Activated CD8-positive, alpha-beta T cell treated with anti-CD3 and anti-CD28 coated beads for 36 hours (primary cell): ENCODE measurements at regions of chr17 and their contacts with region 1.

Region 1: GRCh38 chr17:82551779-82552457 is 32.4 kb downstream of the FOXK2 start:
- DNase-seq: peak; percentile 88
- ATAC-seq: peak; percentile 100
- H3K4me3 Mint-ChIP-seq: no peak overlapping the region
- H3K27ac Mint-ChIP-seq: no peak overlapping the region
- H3K4me1 Mint-ChIP-seq: peaks cover 37% of the 10 kb centered on the region
- H3K27me3 Mint-ChIP-seq: no peaks in the 10 kb centered on the region
- CTCF ChIP-seq: peak; percentile 89

Region 2: DNA sequence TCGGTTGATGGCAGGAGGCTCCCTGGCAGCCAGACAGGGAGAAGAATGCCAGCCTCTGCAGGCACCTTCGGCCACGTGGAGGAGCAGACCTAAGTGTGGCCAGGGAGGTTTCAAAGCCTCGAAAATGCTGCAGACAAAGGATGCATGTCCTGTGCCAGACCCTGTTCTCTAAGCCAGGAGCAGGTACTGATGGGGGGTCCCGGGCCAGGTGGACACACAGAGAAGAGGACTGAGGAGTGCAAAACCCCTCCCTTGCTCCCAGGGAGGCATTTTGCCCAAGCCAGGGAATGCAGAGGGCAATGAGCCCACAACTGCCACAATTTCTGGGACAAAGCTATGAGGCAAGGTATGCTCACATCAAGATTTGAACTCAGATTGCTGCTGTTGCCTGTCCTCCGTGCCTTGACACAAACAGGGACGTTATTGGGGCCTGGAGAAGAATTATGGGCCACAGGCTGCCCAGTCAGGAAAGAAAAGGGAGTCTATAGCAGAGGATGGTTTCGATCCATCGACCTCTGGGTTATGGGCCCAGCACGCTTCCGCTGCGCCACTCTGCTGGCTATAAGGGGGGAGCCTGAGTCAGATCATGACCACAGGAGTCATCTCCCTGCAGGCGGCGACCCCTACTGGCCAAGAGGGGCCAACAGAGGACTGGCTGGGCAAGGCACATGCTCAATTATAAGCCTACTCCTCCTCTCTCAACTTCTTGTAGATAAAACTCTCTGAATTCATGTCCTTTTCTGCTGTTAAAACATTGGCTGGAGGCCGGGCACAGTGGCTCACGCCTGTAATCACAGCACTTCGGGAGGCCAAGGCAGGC is 57.5 kb before region 1 on chr17:
- CTCF ChIA-PET with region 1: interaction called, 6 read pairs
- POLR2A ChIA-PET with region 1: no interaction called
- intact Hi-C with region 1: loop called (anchors 10 kb)
- DNase-seq: peak; percentile 93
- ATAC-seq: peak; percentile 84
- H3K4me3 Mint-ChIP-seq: peak overlapping the region; percentile 72
- H3K27ac Mint-ChIP-seq: peak overlapping the region; percentile 85
- H3K4me1 Mint-ChIP-seq: peaks cover 18% of the 10 kb centered on the region
- H3K27me3 Mint-ChIP-seq: no peaks in the 10 kb centered on the region
- CTCF ChIP-seq: peak; percentile 91

Region 3: DNA sequence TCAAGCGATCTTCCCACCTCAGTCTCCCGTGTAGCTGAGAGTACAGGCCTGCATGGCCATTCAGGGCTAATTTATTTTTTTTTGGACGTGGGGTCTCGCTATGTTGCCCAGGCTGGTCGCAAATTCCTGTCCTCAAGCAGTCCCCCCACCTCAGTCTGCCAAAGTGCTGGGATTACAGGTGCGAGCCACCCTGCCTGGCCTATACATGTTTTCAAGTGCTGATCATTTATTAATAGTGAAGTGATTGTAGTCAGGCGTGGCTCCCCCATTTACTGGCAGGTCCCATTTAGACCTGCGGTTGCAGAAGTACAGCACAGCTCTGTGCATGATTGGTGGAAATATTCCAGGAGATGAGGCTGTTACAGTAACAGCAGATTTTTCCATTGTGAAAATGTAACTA is 24.0 kb before region 1 on chr17:
- CTCF ChIA-PET with region 1: interaction called, 11 read pairs
- POLR2A ChIA-PET with region 1: interaction called, 3 read pairs
- intact Hi-C with region 1: no loop called
- DNase-seq: no peak
- ATAC-seq: no peak
- H3K4me3 Mint-ChIP-seq: no peak overlapping the region
- H3K27ac Mint-ChIP-seq: no peak overlapping the region
- H3K4me1 Mint-ChIP-seq: peaks cover 60% of the 10 kb centered on the region
- H3K27me3 Mint-ChIP-seq: no peaks in the 10 kb centered on the region
- CTCF ChIP-seq: no peak

Region 4: DNA sequence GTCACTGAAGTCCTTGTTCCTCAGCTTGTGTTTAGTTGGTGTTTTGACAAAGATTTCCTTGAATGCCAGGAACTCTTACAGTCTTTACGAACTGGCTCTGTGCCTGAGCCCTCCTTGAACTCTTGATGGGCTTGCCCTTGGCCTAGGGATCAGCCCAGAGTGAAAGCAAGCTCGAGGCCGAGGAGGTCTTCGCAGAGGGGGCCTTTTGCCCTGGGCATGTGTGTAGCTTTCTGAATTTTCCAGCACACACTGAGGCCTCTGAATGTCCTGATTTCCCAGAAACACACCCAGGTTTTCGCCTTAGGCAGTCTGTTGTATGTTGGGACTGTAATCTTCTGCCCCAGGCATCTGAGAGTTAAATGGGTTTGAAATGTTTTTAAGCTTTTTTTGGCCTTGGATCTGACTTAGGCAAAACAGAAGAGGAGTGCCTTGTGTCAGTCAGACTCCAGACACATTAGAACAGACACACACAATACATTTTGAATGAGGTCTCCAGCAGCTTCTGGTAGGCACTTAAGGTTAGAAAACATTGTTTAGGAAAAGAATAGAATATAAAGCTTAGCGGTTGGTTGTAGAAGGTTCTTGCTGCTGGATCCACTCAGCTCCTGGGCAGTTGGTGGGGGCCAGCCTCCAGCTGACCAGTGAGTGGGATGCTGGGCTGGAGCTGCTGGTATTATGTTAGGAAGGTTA is 15.3 kb before region 1 on chr17:
- CTCF ChIA-PET with region 1: interaction called, 23 read pairs
- POLR2A ChIA-PET with region 1: interaction called, 5 read pairs
- intact Hi-C with region 1: no loop called
- DNase-seq: no peak
- ATAC-seq: no peak
- H3K4me3 Mint-ChIP-seq: no peak overlapping the region
- H3K27ac Mint-ChIP-seq: peak overlapping the region; percentile 76
- H3K4me1 Mint-ChIP-seq: peaks cover 52% of the 10 kb centered on the region
- H3K27me3 Mint-ChIP-seq: no peaks in the 10 kb centered on the region
- CTCF ChIP-seq: no peak

Region 5: DNA sequence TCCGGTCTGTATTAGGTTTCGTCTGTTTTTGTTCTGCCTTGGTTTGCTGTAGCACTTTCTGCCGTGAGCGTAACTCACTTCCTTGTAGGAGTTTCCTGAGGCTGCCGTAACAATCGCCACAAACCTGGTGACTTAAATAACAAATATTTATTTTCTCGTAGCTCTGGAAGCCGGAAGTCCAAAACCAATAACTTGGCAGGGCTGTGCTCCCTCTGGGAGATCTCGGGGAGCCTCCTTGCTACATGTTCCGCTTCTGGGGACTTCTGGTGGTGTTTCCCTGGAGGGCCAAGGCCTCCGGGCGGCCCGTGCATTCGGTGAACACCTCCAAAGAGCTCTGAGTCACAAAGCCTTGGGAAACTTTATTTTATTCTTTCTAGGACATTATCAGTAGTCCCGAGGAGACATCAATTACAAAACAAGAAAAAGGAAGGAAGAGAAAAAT is 103.1 kb after region 1 on chr17:
- CTCF ChIA-PET with region 1: no interaction called
- POLR2A ChIA-PET with region 1: no interaction called
- intact Hi-C with region 1: no loop called
- DNase-seq: no peak
- ATAC-seq: no peak
- H3K4me3 Mint-ChIP-seq: no peak overlapping the region
- H3K27ac Mint-ChIP-seq: no peak overlapping the region
- H3K4me1 Mint-ChIP-seq: no peaks in the 10 kb centered on the region
- H3K27me3 Mint-ChIP-seq: no peaks in the 10 kb centered on the region
- CTCF ChIP-seq: no peak